Activated CD4-positive, alpha-beta memory T cell treated with anti-CD3 and anti-CD28 coated beads, Interleukin-2, amount 10 ng/mL, durations not matched to agents 7 days and 5 days (primary cell): ENCODE measurements at regions of chr4 and their contacts with region 1.

Region 1: GRCh38 chr4:138078751-138079520 is 163.2 kb downstream of the SLC7A11 start:
- DNase-seq: no peak
- H3K4me3 Mint-ChIP-seq: no peak overlapping the region
- H3K27ac Mint-ChIP-seq: no peak overlapping the region
- H3K4me1 Mint-ChIP-seq: no peaks in the 10 kb centered on the region
- H3K27me3 Mint-ChIP-seq: no peaks in the 10 kb centered on the region

Region 2: DNA sequence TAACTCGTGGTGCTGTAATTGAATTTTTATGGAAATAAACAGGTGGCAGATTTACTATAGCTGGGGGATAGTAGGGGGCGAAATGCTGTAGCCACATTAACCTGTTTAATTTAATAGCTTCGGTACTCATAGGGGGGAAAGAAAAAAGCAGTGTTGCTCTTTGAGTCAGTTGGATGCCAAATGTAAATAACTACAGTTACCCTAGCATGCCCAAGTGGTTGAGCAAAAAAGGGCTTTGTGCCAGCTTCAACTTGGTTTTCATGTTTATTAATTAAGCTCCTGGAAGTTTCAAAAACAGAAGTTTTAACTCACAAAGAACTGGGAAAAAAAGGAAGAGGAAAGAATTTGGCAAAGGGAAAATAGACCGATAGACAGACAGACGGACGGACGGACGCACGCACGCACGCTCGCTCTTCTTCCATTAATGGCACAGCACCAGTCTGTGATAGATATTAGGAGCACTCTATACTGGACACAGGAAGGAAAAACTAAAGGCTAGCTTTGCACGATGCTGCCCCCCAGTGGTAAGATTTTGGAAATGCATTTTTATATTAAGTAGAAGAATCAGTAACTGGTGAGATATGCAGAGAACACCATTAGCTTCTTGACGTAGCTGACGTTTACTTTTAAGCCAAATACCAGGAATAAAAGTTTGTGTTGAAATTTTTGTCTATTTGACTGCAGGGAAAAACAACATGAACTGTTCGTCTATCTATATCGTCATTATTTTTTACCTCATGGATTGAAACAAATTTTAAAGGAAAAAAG is 11.4 kb after region 1 on chr4:
- CTCF ChIA-PET with region 1: interaction called, 11 read pairs
- POLR2A ChIA-PET with region 1: no interaction called
- DNase-seq: peak; percentile 31
- H3K4me3 Mint-ChIP-seq: no peak overlapping the region
- H3K27ac Mint-ChIP-seq: no peak overlapping the region
- H3K4me1 Mint-ChIP-seq: no peaks in the 10 kb centered on the region
- H3K27me3 Mint-ChIP-seq: no peaks in the 10 kb centered on the region